ENCODE measurements at regions of chr4 and their contacts with region 1.

Region 1: GRCh38 chr4:154399259-154399974 is 92.2 kb downstream of the DCHS2 start:
- DNase-seq: peak; percentile 27 to 51
- ATAC-seq: peak; percentile 89 to 94
- H3K4me3 ChIP-seq: peak overlapping the region; percentile 41
- H3K27ac ChIP-seq: no peak overlapping the region
- H3K4me1 ChIP-seq: no peaks in the 10 kb centered on the region
- CTCF ChIP-seq: peak; percentile 61
- EP300 ChIP-seq: no peak
- POLR2A ChIP-seq: no peak
- RAD21 ChIP-seq: peak; percentile 64 to 65

Region 2: GRCh38 chr4:154506253-154506652 is 106.8 kb after region 1 on chr4:
- CTCF ChIA-PET with region 1: interaction called, 13 read pairs
- POLR2A ChIA-PET with region 1: no interaction called
- DNase-seq: peak in 1 of 2 experiments; percentile 21
- ATAC-seq: peak in 1 of 2 experiments; percentile 68; a peak in 2 of 6 replicates
- H3K4me3 ChIP-seq: no peak overlapping the region
- H3K27ac ChIP-seq: no peak overlapping the region
- H3K4me1 ChIP-seq: no peaks in the 10 kb centered on the region
- CTCF ChIP-seq: peak; percentile 44; the same call in 2 of the 3 replicates
- EP300 ChIP-seq: no peak
- POLR2A ChIP-seq: no peak
- RAD21 ChIP-seq: peak; percentile 37 to 49; a peak in 4 of 5 replicates

Measured in A549 (cell line).